AG04450 (cell line): ENCODE measurements at regions of chr1 and their contacts with region 1.

Region 1: DNA sequence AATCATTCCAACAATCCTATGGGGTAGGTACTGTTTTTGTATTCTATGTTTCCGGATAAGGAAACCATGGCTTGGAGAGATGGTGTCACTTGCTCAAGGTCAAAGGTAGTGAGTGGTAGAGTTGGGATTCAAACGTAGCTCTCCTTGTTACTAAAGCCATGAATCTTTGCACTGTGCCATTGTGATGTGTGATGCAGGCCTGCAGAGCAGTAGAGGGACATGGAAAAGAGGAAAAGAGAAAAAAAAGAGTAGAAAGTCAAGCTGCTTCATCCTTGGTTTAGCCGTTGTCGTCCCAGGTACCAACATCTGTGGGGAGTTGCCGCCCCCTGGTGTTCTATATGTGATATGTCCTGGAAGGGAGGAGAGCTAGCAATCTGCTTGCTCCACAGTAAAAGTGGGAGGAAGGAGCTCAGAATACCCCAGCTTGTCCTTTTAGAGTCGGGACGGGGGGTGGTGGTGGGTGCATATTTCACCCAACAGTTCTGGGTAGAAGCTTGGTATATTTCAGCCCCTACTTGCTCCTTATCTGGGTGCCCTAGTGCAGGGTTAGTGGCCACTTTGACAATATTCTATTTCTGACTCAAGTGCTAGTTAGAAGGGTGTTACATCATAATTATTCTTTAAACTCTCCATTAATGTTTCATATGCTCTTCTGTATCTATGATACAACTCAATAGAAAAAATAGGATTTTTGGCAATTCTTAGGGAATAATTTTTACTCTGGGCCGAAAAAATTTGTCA is 98.4 kb downstream of the EBNA1BP2 start:
- DNase-seq: peak; percentile 47
- H3K4me3 ChIP-seq: no peak overlapping the region
- H3K27ac ChIP-seq: no peak overlapping the region
- H3K27me3 ChIP-seq: no peaks in the 10 kb centered on the region
- CTCF ChIP-seq: peak; percentile 84

Region 2: GRCh38 chr1:42766741-42767509 is 306.7 kb before region 1 on chr1 and contains the starts of genes C1orf50 and P3H1:
- CTCF ChIA-PET with region 1: interaction called, 14 read pairs
- POLR2A ChIA-PET with region 1: interaction called, 3 read pairs
- DNase-seq: peak; percentile 97
- H3K4me3 ChIP-seq: peak within 1 kb of the TSS; percentile 95
- H3K27ac ChIP-seq: peak within 1 kb of the TSS; percentile 87
- H3K27me3 ChIP-seq: no peaks in the 10 kb centered on the region
- CTCF ChIP-seq: no peak
- polyA plus RNA-seq, gene C1orf50: 5.4 and 6.4 TPM in 2 replicates
- polyA plus RNA-seq, gene P3H1: 156 and 188 TPM in 2 replicates

Region 3: DNA sequence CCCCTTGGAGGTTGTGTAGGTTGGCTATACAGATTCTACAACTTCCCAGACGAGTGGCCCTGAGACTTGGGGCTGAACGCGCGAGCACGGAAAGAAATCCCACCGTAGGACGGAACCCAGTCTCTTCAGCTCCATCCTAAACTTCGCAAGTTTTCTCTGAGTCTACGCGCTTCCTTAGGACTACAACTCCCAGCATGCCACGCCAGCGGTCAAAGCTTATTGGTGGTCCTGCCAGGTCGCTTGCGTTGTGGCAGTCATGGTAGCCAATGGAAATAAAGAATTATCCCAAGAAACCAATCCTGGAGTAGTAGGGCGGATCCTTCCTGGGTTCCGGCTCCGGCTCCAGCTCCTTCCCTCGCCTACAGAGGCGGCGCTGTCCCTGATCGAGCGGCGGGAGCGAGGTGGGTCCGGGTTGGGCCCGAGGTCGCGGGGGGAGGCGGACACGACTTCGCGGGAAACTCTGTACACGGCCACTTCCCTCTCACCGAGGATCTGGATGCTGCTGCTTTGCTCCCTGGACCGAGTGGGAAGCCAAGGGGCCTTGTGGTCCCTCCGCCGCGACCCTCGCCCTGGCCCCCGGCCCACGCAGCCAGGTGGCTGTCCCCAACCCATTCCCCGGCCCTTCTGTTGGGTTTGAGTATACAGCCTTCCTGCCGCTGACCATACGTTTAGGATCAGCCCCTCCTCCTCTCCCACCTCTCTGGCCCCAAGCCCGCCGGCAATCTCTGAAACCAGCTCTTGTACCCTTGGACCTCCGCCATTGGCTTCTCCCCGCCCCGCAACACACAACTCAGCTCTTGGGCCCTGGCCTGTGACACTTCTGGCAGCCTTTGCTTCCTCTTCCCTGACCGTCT is 227.2 kb before region 1 on chr1 and contains the start of gene ZNF691:
- CTCF ChIA-PET with region 1: interaction called, 14 read pairs
- POLR2A ChIA-PET with region 1: no interaction called
- DNase-seq: peak; percentile 91
- H3K4me3 ChIP-seq: peak within 1 kb of the TSS; percentile 95
- H3K27ac ChIP-seq: no peak within 1 kb of the TSS
- H3K27me3 ChIP-seq: no peaks in the 10 kb centered on the region
- CTCF ChIP-seq: peak; percentile 59
- polyA plus RNA-seq, gene ZNF691: 5.6 and 6.3 TPM in 2 replicates

Region 4: DNA sequence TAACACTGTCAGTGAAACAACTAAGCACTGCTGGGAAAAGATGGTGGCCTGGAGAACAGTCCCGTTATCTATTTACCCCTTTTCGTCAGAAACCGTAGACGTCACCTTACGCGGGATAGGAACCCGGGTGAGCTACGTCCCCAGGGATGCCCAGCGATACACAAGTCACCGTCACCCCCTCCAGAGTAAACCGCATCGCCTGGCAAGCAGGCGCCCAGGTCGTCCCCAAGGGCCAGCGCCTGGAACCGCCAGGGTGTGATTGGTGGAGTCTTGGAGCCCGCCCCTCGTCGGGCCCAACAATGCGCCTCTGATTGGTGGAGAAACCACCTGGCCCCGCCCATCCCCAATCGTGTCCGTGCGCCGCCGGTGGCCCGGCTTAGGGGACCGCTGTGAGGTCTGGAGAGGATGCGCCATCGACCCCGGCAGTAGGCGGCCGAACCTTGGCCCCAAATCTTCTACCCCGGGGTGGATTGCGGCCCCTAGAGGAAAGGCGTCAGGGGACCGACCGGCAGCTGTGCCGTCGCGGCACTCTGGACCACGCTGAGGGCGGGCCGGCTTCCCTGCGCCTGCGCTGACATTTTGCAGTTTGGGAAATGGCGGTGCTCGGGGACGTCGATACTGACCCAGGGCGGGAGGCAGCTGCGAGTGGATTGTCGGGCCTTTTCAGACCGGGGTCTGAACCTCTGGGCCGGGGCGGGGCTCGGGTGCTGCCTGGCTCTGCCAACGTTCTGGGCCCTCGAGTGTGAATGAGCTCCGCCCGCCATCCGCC is 149.4 kb before region 1 on chr1:
- CTCF ChIA-PET with region 1: interaction called, 709 read pairs
- POLR2A ChIA-PET with region 1: interaction called, 9 read pairs
- DNase-seq: peak; percentile 50
- H3K4me3 ChIP-seq: peak overlapping the region; percentile 71
- H3K27ac ChIP-seq: peak overlapping the region; percentile 65
- H3K27me3 ChIP-seq: no peaks in the 10 kb centered on the region
- CTCF ChIP-seq: peak; percentile 23; the same call in 1 of the 2 replicates

Region 5: DNA sequence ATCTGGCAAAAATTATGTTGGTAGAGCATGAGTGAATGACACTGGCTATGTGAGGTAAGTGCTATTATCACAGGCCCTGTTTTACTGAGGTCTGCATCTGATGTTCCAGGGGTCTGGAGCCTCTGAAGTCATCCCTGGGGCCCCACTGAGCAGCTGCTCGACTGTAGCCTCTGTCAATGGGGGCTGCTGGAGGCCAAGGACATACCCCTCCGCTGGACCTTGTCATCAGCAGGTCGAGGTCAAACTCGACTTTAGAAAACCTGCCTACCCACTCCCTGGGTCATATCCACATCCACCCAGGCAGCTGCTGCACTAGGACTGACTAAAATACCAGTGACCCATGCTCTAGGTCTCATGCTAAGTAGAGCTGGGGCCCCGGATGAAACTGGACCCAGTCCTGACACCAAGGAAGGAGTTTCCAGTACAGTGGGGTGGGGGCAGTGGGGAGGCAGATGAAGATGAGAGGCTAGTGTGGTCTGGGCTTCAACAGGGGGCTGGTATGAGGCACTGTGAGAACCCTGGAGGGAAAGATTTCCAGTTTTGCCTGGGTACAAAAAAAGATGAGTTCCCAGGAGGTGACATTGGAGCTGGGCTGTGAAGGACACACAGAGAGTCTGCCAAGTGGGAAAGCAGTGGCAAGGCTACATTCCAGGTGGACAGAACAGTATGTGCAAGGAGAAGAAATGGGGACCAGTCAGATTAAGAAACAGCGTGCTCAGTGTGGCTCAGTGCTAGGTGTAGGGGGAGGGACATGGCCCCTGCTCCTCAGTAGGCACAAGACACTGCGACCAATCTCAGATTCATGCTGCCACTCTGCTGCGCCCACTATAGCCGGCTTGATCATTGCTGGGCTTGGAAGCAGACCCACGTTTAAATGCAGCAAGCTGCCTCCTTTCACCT is 127.4 kb before region 1 on chr1:
- CTCF ChIA-PET with region 1: interaction called, 20 read pairs
- POLR2A ChIA-PET with region 1: interaction called, 3 read pairs
- DNase-seq: no peak
- H3K4me3 ChIP-seq: no peak overlapping the region
- H3K27ac ChIP-seq: peak overlapping the region; percentile 47
- H3K27me3 ChIP-seq: no peaks in the 10 kb centered on the region
- CTCF ChIP-seq: no peak

Region 6: DNA sequence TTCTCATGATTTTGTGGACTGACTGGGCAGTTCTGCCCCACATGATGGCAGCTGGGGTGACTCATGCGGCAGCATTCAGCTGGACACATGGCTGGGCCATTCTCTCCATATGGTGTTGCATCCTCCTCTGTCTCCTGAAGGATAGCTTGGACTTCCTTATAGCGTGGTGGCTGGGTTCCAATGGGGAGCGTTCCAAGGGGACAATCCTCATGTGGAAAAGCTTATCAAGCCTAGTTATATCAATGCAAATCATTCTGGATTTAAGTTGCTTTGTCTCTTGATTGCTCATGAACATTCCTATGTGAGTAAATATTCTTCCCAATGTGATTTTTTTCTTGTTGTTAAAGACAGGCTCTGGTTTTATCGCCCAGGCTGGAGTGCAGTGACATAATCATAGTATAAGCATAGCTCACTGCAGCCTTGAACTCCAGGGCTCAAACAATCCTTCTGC is 101.8 kb before region 1 on chr1:
- CTCF ChIA-PET with region 1: interaction called, 15 read pairs
- POLR2A ChIA-PET with region 1: no interaction called
- DNase-seq: peak; percentile 78
- H3K4me3 ChIP-seq: no peak overlapping the region
- H3K27ac ChIP-seq: peak overlapping the region; percentile 75
- H3K27me3 ChIP-seq: no peaks in the 10 kb centered on the region
- CTCF ChIP-seq: no peak

Region 7: GRCh38 chr1:43171876-43172526 is 98.3 kb after region 1 on chr1 and contains the starts of genes CFAP57 and EBNA1BP2:
- CTCF ChIA-PET with region 1: no interaction called
- POLR2A ChIA-PET with region 1: no interaction called
- DNase-seq: peak; percentile 76
- H3K4me3 ChIP-seq: peak within 1 kb of the TSS; percentile 97
- H3K27ac ChIP-seq: no peak within 1 kb of the TSS
- H3K27me3 ChIP-seq: peaks cover under 1% of the 10 kb centered on the region
- CTCF ChIP-seq: no peak
- polyA plus RNA-seq, gene CFAP57: 0.55 and 0.58 TPM in 2 replicates
- polyA plus RNA-seq, gene EBNA1BP2: 61.6 and 62.0 TPM in 2 replicates

Region 8: GRCh38 chr1:43414634-43415223 is 341.1 kb after region 1 on chr1:
- CTCF ChIA-PET with region 1: interaction called, 11 read pairs
- POLR2A ChIA-PET with region 1: no interaction called
- DNase-seq: no peak
- H3K4me3 ChIP-seq: no peak overlapping the region
- H3K27ac ChIP-seq: no peak overlapping the region
- H3K27me3 ChIP-seq: no peaks in the 10 kb centered on the region
- CTCF ChIP-seq: peak; percentile 68